ENCODE measurements at regions of chr1 and their contacts with region 1.

Region 1: GRCh38 chr1:151585622-151586021 is 26.2 kb upstream of the SNX27 start:
- DNase-seq: no peak
- H3K4me3 ChIP-seq: no peak overlapping the region
- H3K27ac ChIP-seq: peak overlapping the region; percentile 61 to 65
- H3K4me1 ChIP-seq: no peaks in the 10 kb centered on the region
- H3K27me3 ChIP-seq: no peaks in the 10 kb centered on the region
- CTCF ChIP-seq: no peak
- POLR2A ChIP-seq: no peak

Region 2: GRCh38 chr1:150127868-150128267 is 1457.8 kb before region 1 on chr1:
- intact Hi-C with region 1: no loop called
- DNase-seq: no peak
- H3K4me3 ChIP-seq: no peak overlapping the region
- H3K27ac ChIP-seq: no peak overlapping the region
- H3K4me1 ChIP-seq: no peaks in the 10 kb centered on the region
- H3K27me3 ChIP-seq: no peaks in the 10 kb centered on the region
- CTCF ChIP-seq: no peak
- POLR2A ChIP-seq: no peak

Region 3: GRCh38 chr1:151739590-151740375 is 154.2 kb after region 1 on chr1:
- intact Hi-C with region 1: loop called (anchors 2 kb)
- DNase-seq: peak; percentile 72 to 83
- H3K4me3 ChIP-seq: peak overlapping the region in 1 of 3 donors; percentile 7
- H3K27ac ChIP-seq: peak overlapping the region; percentile 56 to 57
- H3K4me1 ChIP-seq: no peaks in the 10 kb centered on the region
- H3K27me3 ChIP-seq: no peaks in the 10 kb centered on the region
- CTCF ChIP-seq: peak in 1 of 3 donors; percentile 7
- POLR2A ChIP-seq: no peak